ENCODE measurements at regions of chr19 and their contacts with region 1.

Region 1: GRCh38 chr19:764301-764700 is 13.4 kb downstream of the MISP start:
- DNase-seq: no peak
- H3K4me3 ChIP-seq: no peak overlapping the region
- H3K27ac ChIP-seq: no peak overlapping the region
- H3K27me3 ChIP-seq: no peaks in the 10 kb centered on the region
- CTCF ChIP-seq: no peak

Region 2: GRCh38 chr19:845707-846521 is 81.6 kb after region 1 on chr19:
- intact Hi-C with region 1: loop called in 1 of 2 experiments (anchors 1 kb)
- DNase-seq: no peak
- H3K4me3 ChIP-seq: no peak overlapping the region
- H3K27ac ChIP-seq: no peak overlapping the region
- H3K27me3 ChIP-seq: peaks cover 0 to 65% (median 39%) of the 10 kb centered on the region in 45 donors
- CTCF ChIP-seq: no peak

Measured in dorsolateral prefrontal cortex (tissue), 120 donors.